GM23248 (cell line): ENCODE measurements at regions of chr10 and their contacts with region 1.

Region 1: GRCh38 chr10:11074536-11075267 is 57.0 kb downstream of the CELF2 start:
- DNase-seq: no peak
- H3K4me3 ChIP-seq: no peak overlapping the region
- H3K27ac ChIP-seq: no peak overlapping the region
- H3K4me1 ChIP-seq: no peaks in the 10 kb centered on the region
- H3K27me3 ChIP-seq: no peaks in the 10 kb centered on the region; the same call in 1 of the 2 replicates

Region 2: DNA sequence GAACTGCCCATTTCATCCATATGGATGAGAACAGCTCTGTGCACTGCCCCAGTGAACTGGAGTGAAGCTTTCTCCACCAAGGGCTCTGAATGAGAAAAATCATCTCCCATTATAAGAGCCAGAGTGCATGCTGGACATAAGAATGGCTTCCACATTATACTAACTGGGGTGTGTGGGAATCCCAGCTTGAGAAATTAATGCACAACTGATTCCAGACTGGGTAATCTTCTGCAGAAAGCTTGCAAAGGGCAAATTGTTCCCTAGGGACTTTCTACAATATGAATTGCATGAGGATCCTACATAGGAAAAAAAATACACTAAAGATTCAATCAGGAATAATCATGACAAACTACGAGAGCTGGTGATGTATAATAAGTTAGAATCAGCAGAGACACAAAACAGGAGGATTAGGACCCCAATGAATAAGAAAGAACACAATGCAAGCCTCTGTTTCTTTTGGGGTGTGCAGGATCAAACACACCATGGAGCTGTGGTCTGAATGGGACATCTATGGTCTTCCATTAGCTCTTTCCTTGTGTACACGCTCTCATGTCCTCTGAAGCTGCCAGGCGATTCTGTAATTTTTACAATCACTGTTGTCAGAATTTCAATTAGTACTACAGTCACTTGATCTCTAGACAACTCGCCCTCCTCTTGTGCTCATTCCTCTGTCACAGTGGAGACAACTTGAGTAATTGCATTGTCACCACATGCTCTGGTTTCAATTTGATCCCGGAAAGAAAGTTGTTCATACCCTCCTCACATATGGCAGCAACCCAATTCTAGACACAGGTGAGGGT is 1692.8 kb before region 1 on chr10:
- in situ Hi-C with region 1: loop called (anchors 25 kb)
- DNase-seq: no peak
- H3K4me3 ChIP-seq: no peak overlapping the region
- H3K27ac ChIP-seq: no peak overlapping the region
- H3K4me1 ChIP-seq: no peaks in the 10 kb centered on the region
- H3K27me3 ChIP-seq: no peaks in the 10 kb centered on the region